ENCODE measurements at regions of chr5 and their contacts with region 1.

Region 1: DNA sequence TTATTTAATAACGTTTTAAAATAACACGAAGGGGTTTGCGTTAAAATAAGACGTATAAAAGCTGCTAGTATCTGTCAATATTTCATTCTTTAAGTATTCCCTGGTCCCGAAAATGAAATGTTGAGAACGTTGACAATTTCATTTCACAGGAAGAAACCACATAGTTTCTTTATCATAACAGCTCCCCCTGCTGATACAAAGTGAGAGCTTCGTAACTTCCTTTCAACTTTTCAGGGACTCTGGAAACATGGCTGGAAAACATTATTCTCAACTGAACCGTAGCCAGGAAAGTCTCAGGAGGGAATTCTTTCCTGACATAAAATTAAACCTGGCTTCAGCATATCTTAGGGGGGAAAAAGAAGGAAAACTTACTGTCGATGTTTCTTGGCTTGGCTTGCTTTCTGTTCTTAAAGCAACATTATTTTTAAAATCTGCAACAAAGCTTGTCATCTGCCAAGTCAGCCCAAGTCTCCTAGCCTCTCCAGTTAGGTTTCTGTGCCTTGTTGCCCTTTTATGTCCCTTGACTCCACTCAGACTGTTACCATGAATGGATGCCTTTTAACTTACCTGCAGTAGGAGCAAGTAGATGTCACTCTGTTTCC is 122.9 kb upstream of the DAB2 start:
- DNase-seq: no peak
- H3K4me3 Mint-ChIP-seq: no peak overlapping the region
- H3K27ac Mint-ChIP-seq: no peak overlapping the region
- H3K4me1 Mint-ChIP-seq: peaks cover 7% of the 10 kb centered on the region
- H3K27me3 Mint-ChIP-seq: peaks cover 4% of the 10 kb centered on the region

Region 2: GRCh38 chr5:39148983-39149534 is 398.6 kb before region 1 on chr5:
- CTCF ChIA-PET with region 1: no interaction called
- POLR2A ChIA-PET with region 1: no interaction called
- intact Hi-C with region 1: loop called (anchors 1 kb)
- DNase-seq: no peak
- H3K4me3 Mint-ChIP-seq: no peak overlapping the region
- H3K27ac Mint-ChIP-seq: peak overlapping the region; percentile 90
- H3K4me1 Mint-ChIP-seq: peaks cover 61% of the 10 kb centered on the region
- H3K27me3 Mint-ChIP-seq: no peaks in the 10 kb centered on the region

Region 3: DNA sequence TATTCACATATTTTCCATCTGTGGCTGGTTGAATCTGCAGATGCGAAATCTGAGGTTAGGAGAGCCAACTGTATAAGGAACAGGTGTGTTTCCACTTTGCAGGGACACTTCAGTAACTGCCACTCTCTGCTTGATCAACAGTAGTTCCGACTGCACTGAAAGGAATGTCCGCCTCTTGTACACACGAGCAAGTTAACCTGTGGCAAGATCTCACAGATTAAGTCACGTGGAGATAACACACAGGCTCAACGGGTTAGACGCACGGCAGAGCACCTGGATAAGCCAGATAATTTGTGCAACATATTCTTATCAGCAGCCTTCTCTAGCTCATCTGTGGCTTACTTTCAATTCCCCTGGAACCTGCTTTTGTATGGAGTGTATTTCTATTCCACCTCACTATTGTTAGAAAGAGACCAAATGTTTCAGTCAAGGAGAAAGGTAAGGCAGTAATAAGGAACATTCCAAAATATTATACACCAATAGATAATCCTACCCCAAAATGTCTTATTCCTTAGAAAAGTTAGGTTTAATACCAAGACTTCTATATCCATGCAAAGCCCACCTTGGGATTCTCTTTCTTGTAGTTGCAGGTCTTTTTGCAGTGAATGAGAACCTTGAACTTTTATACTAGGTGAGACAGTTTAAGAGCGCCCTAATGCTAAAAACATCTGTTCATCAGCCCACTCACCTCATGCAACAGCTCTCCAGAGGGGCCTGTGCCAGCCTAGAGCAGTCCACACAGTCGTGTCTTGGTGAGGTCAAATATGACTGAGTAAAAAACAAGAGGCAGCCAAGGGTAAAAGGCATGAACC is 176.9 kb before region 1 on chr5:
- CTCF ChIA-PET with region 1: interaction called, 73 read pairs
- POLR2A ChIA-PET with region 1: no interaction called
- intact Hi-C with region 1: no loop called
- DNase-seq: no peak
- H3K4me3 Mint-ChIP-seq: no peak overlapping the region
- H3K27ac Mint-ChIP-seq: no peak overlapping the region
- H3K4me1 Mint-ChIP-seq: peaks cover 3% of the 10 kb centered on the region
- H3K27me3 Mint-ChIP-seq: no peaks in the 10 kb centered on the region

Region 4: GRCh38 chr5:39811381-39811780 is 263.7 kb after region 1 on chr5:
- CTCF ChIA-PET with region 1: no interaction called
- POLR2A ChIA-PET with region 1: no interaction called
- intact Hi-C with region 1: no loop called
- DNase-seq: no peak
- H3K4me3 Mint-ChIP-seq: no peak overlapping the region
- H3K27ac Mint-ChIP-seq: no peak overlapping the region
- H3K4me1 Mint-ChIP-seq: no peaks in the 10 kb centered on the region
- H3K27me3 Mint-ChIP-seq: peaks cover 8% of the 10 kb centered on the region

Region 5: GRCh38 chr5:39835371-39835770 is 287.7 kb after region 1 on chr5:
- CTCF ChIA-PET with region 1: no interaction called
- POLR2A ChIA-PET with region 1: no interaction called
- intact Hi-C with region 1: no loop called
- DNase-seq: no peak
- H3K4me3 Mint-ChIP-seq: no peak overlapping the region
- H3K27ac Mint-ChIP-seq: no peak overlapping the region
- H3K4me1 Mint-ChIP-seq: no peaks in the 10 kb centered on the region
- H3K27me3 Mint-ChIP-seq: peaks cover 2% of the 10 kb centered on the region

Measured in activated CD4-positive, alpha-beta memory T cell treated with anti-CD3 and anti-CD28 coated beads for 36 hours (primary cell).